ENCODE measurements at regions of chr9 and their contacts with region 1.

Region 1: GRCh38 chr9:37753489-37754190 is at the start of gene TRMT10B:
- DNase-seq: no peak
- H3K4me3 ChIP-seq: no peak within 1 kb of the TSS
- H3K27ac ChIP-seq: no peak within 1 kb of the TSS
- H3K4me1 ChIP-seq: no peaks in the 10 kb centered on the region
- CTCF ChIP-seq: no peak
- total RNA-seq, gene TRMT10B: not detected in 2 replicates

Region 2: DNA sequence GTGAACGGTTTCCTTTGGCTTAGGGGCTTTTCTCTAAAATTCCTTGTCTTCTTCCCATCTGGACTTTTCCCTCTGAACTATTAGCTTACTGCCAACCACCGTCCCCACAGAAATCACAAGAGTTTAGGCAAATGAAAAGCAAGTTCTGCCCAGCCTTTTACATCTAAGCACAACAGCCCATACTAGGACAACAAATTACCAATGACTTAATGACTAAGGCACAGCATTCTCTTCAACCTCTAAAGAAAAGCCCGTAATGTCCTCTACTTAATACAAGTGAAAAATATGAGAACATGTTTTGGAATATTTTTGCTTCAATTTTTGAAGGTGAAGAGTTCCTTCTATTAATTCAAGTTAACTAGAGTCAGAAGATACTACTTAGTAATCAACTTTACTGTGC is 289.6 kb before region 1 on chr9:
- CTCF ChIA-PET with region 1: no interaction called
- POLR2A ChIA-PET with region 1: no interaction called
- intact Hi-C with region 1: no loop called
- DNase-seq: no peak
- H3K4me3 ChIP-seq: peak overlapping the region; percentile 89
- H3K27ac ChIP-seq: peak overlapping the region; percentile 74
- H3K4me1 ChIP-seq: peaks cover 38% of the 10 kb centered on the region
- CTCF ChIP-seq: no peak

Region 3: DNA sequence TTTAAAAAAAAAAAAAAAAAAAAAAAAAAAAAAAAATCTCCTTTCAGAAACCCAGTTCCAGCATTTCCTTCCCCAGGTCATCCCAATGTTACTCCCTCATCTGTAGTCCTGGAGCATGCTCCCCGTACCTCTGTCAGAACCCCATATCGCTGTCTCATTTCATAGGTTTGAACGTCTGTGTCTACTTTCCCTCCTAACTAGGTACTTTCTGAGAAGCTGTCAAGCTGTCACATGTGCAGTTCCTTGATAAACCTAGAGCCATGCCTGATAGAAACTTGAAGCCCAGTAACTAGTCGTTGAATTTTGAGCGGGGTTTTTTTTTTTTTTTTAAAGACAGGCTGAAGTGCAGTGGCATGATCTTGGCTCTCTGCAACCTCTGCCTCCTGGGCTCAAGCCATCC is 15.7 kb after region 1 on chr9:
- CTCF ChIA-PET with region 1: no interaction called
- POLR2A ChIA-PET with region 1: interaction called, 11 read pairs
- intact Hi-C with region 1: no loop called
- DNase-seq: no peak
- H3K4me3 ChIP-seq: no peak overlapping the region
- H3K27ac ChIP-seq: no peak overlapping the region
- H3K4me1 ChIP-seq: no peaks in the 10 kb centered on the region
- CTCF ChIP-seq: no peak